ENCODE measurements at regions of chr10 and their contacts with region 1.

Region 1: DNA sequence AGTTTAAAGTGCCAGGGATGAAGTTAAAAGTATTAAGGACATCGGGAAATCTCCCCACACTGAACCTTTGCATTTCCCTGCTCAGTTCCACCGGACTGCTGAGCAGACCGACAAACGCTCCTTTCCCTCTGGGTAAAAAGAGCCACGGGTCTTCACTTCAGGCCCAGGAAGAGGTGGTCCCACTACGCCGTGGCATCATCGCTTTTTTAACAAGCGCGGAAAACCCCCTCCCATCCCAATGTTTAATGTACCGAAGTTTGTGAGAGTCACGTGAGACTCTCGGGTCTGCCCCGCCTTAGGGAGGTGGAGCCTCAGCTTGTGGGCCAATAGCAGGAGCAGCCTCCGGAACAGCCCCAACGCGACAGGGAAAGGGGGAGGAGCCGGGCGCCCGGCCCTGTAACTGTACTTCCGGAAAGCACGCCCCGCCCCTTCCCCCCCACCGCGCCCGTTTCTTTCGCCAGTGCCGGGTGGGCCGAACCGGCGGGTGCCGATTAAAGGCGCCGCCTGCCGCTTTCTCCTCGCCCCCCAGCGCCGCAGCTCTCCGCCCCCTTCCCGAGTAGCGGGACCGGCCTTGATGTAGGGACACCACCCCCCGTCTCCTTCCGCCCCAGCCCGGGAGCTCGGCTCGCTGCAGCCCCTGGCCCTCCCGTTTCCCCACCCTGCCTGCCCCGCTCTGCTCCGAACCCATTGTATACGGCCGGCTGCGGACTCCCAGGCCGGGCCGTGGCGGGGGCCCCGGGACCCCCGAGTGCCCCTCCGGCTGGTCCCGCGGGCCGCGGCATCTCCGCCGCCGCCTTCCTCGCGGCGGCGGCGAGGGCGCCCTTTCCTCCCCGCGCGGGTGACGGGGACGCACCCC is 2.2 kb upstream of the TRIM8 start:
- DNase-seq: peak; percentile 94 to 97
- ATAC-seq: peak; percentile 31 to 79
- H3K4me3 ChIP-seq: peak overlapping the region; percentile 94
- H3K27ac ChIP-seq: peak overlapping the region; percentile 98
- H3K4me1 ChIP-seq: peaks cover 8% of the 10 kb centered on the region
- CTCF ChIP-seq: no peak
- EP300 ChIP-seq: no peak
- POLR2A ChIP-seq: peak; percentile 21
- RAD21 ChIP-seq: no peak

Region 2: GRCh38 chr10:102485093-102485784 is 156.9 kb before region 1 on chr10:
- CTCF ChIA-PET with region 1: no interaction called
- POLR2A ChIA-PET with region 1: no interaction called
- DNase-seq: no peak
- ATAC-seq: no peak
- H3K4me3 ChIP-seq: no peak overlapping the region
- H3K27ac ChIP-seq: no peak overlapping the region
- H3K4me1 ChIP-seq: no peaks in the 10 kb centered on the region
- CTCF ChIP-seq: no peak
- EP300 ChIP-seq: no peak
- POLR2A ChIP-seq: no peak
- RAD21 ChIP-seq: no peak

Region 3: GRCh38 chr10:102503281-102504220 is 138.6 kb before region 1 on chr10 and contains the start of gene SUFU:
- CTCF ChIA-PET with region 1: interaction called, 24 read pairs
- POLR2A ChIA-PET with region 1: interaction called, 5 read pairs
- DNase-seq: peak; percentile 88 to 99
- ATAC-seq: peak; percentile 64 to 79
- H3K4me3 ChIP-seq: peak within 1 kb of the TSS; percentile 82
- H3K27ac ChIP-seq: peak within 1 kb of the TSS; percentile 87 to 95
- H3K4me1 ChIP-seq: peaks cover 17% of the 10 kb centered on the region; the same call in 2 of the 3 replicates
- CTCF ChIP-seq: peak; percentile 88
- EP300 ChIP-seq: no peak
- POLR2A ChIP-seq: peak; percentile 96
- RAD21 ChIP-seq: peak; percentile 75 to 78
- polyA plus RNA-seq, gene SUFU: 3.7 and 4.5 TPM in 2 replicates

Region 4: DNA sequence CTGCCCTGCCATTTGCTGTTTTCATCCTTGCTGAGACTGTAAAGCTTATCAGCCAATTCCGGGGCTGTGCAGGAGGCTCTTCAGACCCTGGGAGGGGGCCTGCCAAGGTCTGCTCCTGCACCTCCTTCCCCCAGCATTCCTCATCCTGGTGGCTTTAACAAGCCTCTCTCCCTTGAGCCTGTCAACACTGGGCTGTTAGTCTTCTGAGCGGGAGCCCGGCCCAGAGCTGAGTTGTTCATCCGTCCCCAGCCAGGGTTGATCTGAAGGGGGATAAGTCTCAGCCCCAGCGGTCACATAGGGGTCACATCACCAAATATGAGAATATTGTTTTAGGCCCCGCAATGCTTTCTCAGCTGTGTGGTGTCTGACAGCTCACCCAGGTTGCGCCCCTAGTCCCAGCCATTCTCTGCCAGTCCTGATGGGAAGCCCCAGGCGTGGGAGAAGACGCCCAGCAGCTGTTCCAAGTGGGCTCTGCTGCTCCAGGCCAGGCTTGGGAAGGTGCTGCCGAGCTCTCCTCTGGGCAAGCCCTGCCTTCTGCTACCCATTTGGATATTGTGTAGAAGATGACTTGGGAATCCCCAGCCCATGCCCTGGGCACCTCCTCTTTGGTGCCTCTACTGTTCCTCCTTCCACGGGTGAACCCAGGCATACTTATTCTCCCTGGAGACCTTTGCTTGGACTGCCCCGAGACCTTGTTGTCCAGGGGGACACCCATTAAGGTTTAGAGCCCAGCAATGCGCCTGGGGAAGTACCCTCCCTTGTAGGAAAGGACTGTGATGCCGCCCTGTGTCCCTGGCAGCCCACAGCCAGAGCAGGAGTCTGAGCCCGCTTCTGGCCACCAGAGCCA is 21.3 kb before region 1 on chr10:
- CTCF ChIA-PET with region 1: interaction called, 11 read pairs
- POLR2A ChIA-PET with region 1: no interaction called
- DNase-seq: no peak
- ATAC-seq: no peak
- H3K4me3 ChIP-seq: no peak overlapping the region
- H3K27ac ChIP-seq: no peak overlapping the region
- H3K4me1 ChIP-seq: no peaks in the 10 kb centered on the region
- CTCF ChIP-seq: no peak
- EP300 ChIP-seq: no peak
- POLR2A ChIP-seq: no peak
- RAD21 ChIP-seq: no peak

Region 5: GRCh38 chr10:102629661-102630614 is 12.2 kb before region 1 on chr10:
- CTCF ChIA-PET with region 1: interaction called, 14 read pairs
- POLR2A ChIA-PET with region 1: interaction called, 13 read pairs
- DNase-seq: peak in 1 of 2 experiments; percentile 32
- ATAC-seq: peak in 1 of 2 experiments; percentile 47; a peak in 3 of 6 replicates
- H3K4me3 ChIP-seq: no peak overlapping the region
- H3K27ac ChIP-seq: peak overlapping the region in 1 of 2 experiments; percentile 86; a peak in 3 of 6 replicates
- H3K4me1 ChIP-seq: peaks cover 36% of the 10 kb centered on the region
- CTCF ChIP-seq: no peak
- EP300 ChIP-seq: no peak
- POLR2A ChIP-seq: no peak
- RAD21 ChIP-seq: no peak

Region 6: GRCh38 chr10:102660888-102661657 is 19.0 kb after region 1 on chr10:
- CTCF ChIA-PET with region 1: interaction called, 38 read pairs
- POLR2A ChIA-PET with region 1: interaction called, 4 read pairs
- DNase-seq: no peak
- ATAC-seq: peak; percentile 22 to 35; a peak in 4 of 6 replicates
- H3K4me3 ChIP-seq: no peak overlapping the region
- H3K27ac ChIP-seq: 0 out of 6 replicates have a peak overlapping the region, but pooled peaks of 1 of the 2 experiments have one; percentile 17
- H3K4me1 ChIP-seq: peaks cover 17% of the 10 kb centered on the region
- CTCF ChIP-seq: no peak
- EP300 ChIP-seq: no peak
- POLR2A ChIP-seq: no peak
- RAD21 ChIP-seq: no peak

Region 7: GRCh38 chr10:102669206-102670064 is 27.3 kb after region 1 on chr10:
- CTCF ChIA-PET with region 1: interaction called, 19 read pairs
- POLR2A ChIA-PET with region 1: interaction called, 3 read pairs
- DNase-seq: peak; percentile 34 to 44
- ATAC-seq: peak; percentile 60 to 78
- H3K4me3 ChIP-seq: no peak overlapping the region
- H3K27ac ChIP-seq: peak overlapping the region; percentile 63 to 69; a peak in 5 of 6 replicates
- H3K4me1 ChIP-seq: peaks cover 30% of the 10 kb centered on the region
- CTCF ChIP-seq: peak; percentile 39; the same call in 2 of the 3 replicates
- EP300 ChIP-seq: no peak
- POLR2A ChIP-seq: no peak
- RAD21 ChIP-seq: peak in 1 of 2 experiments; percentile 31; a peak in 2 of 5 replicates

Region 8: GRCh38 chr10:102713814-102714620 is 71.9 kb after region 1 on chr10 and contains the start of gene ARL3:
- CTCF ChIA-PET with region 1: interaction called, 15 read pairs
- POLR2A ChIA-PET with region 1: interaction called, 15 read pairs
- DNase-seq: peak; percentile 97
- ATAC-seq: peak; percentile 91 to 94
- H3K4me3 ChIP-seq: peak within 1 kb of the TSS; percentile 95
- H3K27ac ChIP-seq: peak within 1 kb of the TSS; percentile 88 to 94
- H3K4me1 ChIP-seq: peaks cover 29% of the 10 kb centered on the region
- CTCF ChIP-seq: no peak
- EP300 ChIP-seq: no peak
- POLR2A ChIP-seq: no peak; the same call in none of the 2 replicates
- RAD21 ChIP-seq: no peak
- polyA plus RNA-seq, gene ARL3: 18.2 and 20.2 TPM in 2 replicates

Region 9: GRCh38 chr10:102764389-102765178 is 122.5 kb after region 1 on chr10:
- CTCF ChIA-PET with region 1: no interaction called
- POLR2A ChIA-PET with region 1: no interaction called
- DNase-seq: no peak
- ATAC-seq: no peak
- H3K4me3 ChIP-seq: no peak overlapping the region
- H3K27ac ChIP-seq: no peak overlapping the region
- H3K4me1 ChIP-seq: peaks cover 25% of the 10 kb centered on the region
- CTCF ChIP-seq: no peak
- EP300 ChIP-seq: no peak
- POLR2A ChIP-seq: no peak
- RAD21 ChIP-seq: no peak

Measured in A549 (cell line).